WTC11 (cell line): ENCODE measurements at regions of chr6 and their contacts with region 1.

Region 1: DNA sequence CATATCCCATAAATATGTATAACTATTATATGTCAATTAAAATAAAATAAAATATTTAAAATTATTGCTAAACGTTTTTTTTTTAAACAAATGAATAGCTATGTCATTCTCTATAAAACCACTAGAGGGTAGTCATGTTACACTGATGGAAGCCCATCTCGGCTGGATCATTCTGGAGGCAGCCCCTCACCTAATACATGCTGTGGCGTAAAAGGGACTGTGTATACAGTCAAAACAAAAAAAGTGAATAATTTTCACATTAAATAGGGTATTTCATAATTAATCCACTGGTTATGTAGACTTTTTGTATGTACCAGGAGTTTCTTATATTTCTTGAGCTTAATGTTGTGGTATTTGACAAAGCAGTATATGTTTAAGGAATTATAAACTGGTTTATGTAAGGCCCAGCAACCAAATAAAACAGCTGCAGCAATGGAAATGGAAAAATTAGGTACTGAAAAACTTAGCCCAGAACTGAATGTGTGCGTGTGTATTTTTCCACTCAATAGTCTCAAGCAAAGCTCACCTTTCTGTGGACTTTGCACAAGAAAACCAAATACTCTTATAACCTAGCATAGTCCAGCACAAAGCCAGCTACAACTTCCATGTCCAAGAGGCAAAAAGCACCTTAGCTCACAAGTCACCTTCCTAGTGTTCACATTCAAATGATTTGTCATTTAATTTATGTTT is 81.7 kb downstream of the COL9A1 start:
- DNase-seq: no peak
- ATAC-seq: peak; percentile 83
- H3K4me3 Mint-ChIP-seq: no peak overlapping the region
- H3K27ac Mint-ChIP-seq: no peak overlapping the region
- H3K4me1 Mint-ChIP-seq: no peaks in the 10 kb centered on the region
- H3K27me3 Mint-ChIP-seq: no peaks in the 10 kb centered on the region
- CTCF ChIP-seq: peak; percentile 69

Region 2: GRCh38 chr6:69791065-69791471 is 430.1 kb before region 1 on chr6:
- CTCF ChIA-PET with region 1: no interaction called
- POLR2A ChIA-PET with region 1: no interaction called
- DNase-seq: no peak
- ATAC-seq: peak; percentile 76
- H3K4me3 Mint-ChIP-seq: peak overlapping the region; percentile 21; the same call in 1 of the 2 replicates
- H3K27ac Mint-ChIP-seq: peak overlapping the region; percentile 57
- H3K4me1 Mint-ChIP-seq: peaks cover 31% of the 10 kb centered on the region
- H3K27me3 Mint-ChIP-seq: no peaks in the 10 kb centered on the region
- CTCF ChIP-seq: no peak

Region 3: GRCh38 chr6:69936674-69937363 is 284.4 kb before region 1 on chr6:
- CTCF ChIA-PET with region 1: no interaction called
- POLR2A ChIA-PET with region 1: no interaction called
- DNase-seq: no peak
- ATAC-seq: no peak
- H3K4me3 Mint-ChIP-seq: no peak overlapping the region
- H3K27ac Mint-ChIP-seq: no peak overlapping the region
- H3K4me1 Mint-ChIP-seq: no peaks in the 10 kb centered on the region
- H3K27me3 Mint-ChIP-seq: no peaks in the 10 kb centered on the region; the same call in 1 of the 2 replicates
- CTCF ChIP-seq: no peak

Region 4: GRCh38 chr6:70183538-70183937 is 37.6 kb before region 1 on chr6:
- CTCF ChIA-PET with region 1: no interaction called
- POLR2A ChIA-PET with region 1: no interaction called
- DNase-seq: no peak
- ATAC-seq: no peak
- H3K4me3 Mint-ChIP-seq: no peak overlapping the region
- H3K27ac Mint-ChIP-seq: no peak overlapping the region
- H3K4me1 Mint-ChIP-seq: no peaks in the 10 kb centered on the region
- H3K27me3 Mint-ChIP-seq: no peaks in the 10 kb centered on the region
- CTCF ChIP-seq: no peak

Region 5: GRCh38 chr6:70241991-70242420 is 20.8 kb after region 1 on chr6:
- CTCF ChIA-PET with region 1: interaction called, 12 read pairs
- POLR2A ChIA-PET with region 1: no interaction called
- DNase-seq: no peak
- ATAC-seq: peak; percentile 71
- H3K4me3 Mint-ChIP-seq: no peak overlapping the region
- H3K27ac Mint-ChIP-seq: peak overlapping the region; percentile 68
- H3K4me1 Mint-ChIP-seq: peaks cover 14% of the 10 kb centered on the region
- H3K27me3 Mint-ChIP-seq: no peaks in the 10 kb centered on the region
- CTCF ChIP-seq: no peak

Region 6: DNA sequence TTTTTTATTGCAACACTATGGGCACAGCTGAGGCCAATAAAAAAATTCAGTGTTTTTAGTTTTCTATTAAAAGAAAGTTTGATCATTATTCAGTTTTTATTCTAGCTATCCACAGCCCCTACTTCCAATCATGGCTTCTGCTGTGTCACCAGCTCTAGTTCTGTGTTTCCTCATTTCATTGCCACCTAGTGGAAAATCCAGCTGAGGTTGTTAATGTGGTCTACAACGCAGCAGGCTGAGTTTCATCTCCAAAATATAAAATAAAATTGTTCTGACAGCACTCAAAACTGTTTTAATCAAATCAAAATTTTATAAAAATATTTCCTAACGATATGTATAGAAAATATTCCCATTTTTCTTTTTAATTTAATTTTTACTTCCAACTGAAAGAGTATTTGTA is 68.1 kb after region 1 on chr6:
- CTCF ChIA-PET with region 1: interaction called, 35 read pairs
- POLR2A ChIA-PET with region 1: no interaction called
- DNase-seq: no peak
- ATAC-seq: peak; percentile 61
- H3K4me3 Mint-ChIP-seq: no peak overlapping the region
- H3K27ac Mint-ChIP-seq: no peak overlapping the region
- H3K4me1 Mint-ChIP-seq: no peaks in the 10 kb centered on the region
- H3K27me3 Mint-ChIP-seq: peaks cover 11% of the 10 kb centered on the region
- CTCF ChIP-seq: no peak

Region 7: DNA sequence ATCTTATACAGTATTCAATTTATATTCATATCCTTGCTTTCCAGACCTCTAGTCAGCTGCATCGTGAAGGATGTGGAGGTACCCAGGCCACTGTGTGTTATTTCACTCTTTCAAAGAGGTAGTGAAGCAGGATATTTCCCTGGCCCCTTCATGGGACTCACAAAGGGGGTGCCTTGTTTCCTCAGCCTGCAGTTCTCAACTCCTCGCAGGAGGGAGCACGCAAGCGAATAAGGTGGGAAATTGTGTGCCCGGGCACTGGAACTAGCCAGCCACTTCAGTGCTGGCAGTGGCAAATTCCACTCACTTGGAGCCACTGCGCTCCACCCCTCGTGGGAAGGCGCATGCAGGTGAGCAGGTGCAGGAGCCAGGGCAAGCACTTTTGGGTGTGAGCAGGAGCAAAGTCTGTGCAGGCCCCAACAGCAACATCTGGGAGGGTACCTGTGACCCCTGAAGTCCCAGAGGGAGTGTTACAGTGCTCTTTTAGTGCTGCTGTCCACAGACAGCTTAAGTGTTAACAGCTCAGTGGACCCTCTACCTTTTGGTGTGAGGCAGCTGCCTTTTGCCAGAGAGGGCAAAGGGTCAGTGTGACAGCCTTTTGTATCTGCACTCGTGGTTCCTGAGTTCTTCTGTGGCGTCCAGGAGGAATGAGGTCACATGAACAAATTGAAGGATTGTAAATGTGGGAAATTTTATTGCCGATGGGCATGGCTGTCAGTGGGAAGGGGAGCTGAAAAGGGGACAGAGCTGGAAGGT is 142.7 kb after region 1 on chr6:
- CTCF ChIA-PET with region 1: interaction called, 83 read pairs
- POLR2A ChIA-PET with region 1: no interaction called
- DNase-seq: no peak
- ATAC-seq: peak; percentile 62
- H3K4me3 Mint-ChIP-seq: no peak overlapping the region
- H3K27ac Mint-ChIP-seq: no peak overlapping the region
- H3K4me1 Mint-ChIP-seq: no peaks in the 10 kb centered on the region
- H3K27me3 Mint-ChIP-seq: no peaks in the 10 kb centered on the region
- CTCF ChIP-seq: no peak

Region 8: GRCh38 chr6:70456735-70457134 is 235.6 kb after region 1 on chr6:
- CTCF ChIA-PET with region 1: no interaction called
- POLR2A ChIA-PET with region 1: no interaction called
- DNase-seq: no peak
- ATAC-seq: no peak
- H3K4me3 Mint-ChIP-seq: no peak overlapping the region
- H3K27ac Mint-ChIP-seq: no peak overlapping the region
- H3K4me1 Mint-ChIP-seq: no peaks in the 10 kb centered on the region
- H3K27me3 Mint-ChIP-seq: no peaks in the 10 kb centered on the region
- CTCF ChIP-seq: no peak